CD8-positive, alpha-beta T cell (primary cell): ENCODE measurements at regions of chr1 and their contacts with region 1.

Region 1: GRCh38 chr1:94463765-94464330 is 45.7 kb downstream of the ABCD3 start:
- DNase-seq: peak in 2 of 9 experiments; percentile 42 to 57
- ATAC-seq: peak; percentile 46
- H3K4me3 ChIP-seq: no peak overlapping the region
- H3K4me3 Mint-ChIP-seq: no peak overlapping the region
- H3K27ac ChIP-seq: no peak overlapping the region
- H3K27ac Mint-ChIP-seq: no peak overlapping the region
- H3K4me1 ChIP-seq: no peaks in the 10 kb centered on the region
- H3K4me1 Mint-ChIP-seq: peaks cover 7% of the 10 kb centered on the region
- H3K27me3 ChIP-seq: no peaks in the 10 kb centered on the region
- H3K27me3 Mint-ChIP-seq: no peaks in the 10 kb centered on the region
- CTCF ChIP-seq: peak; percentile 36

Region 2: GRCh38 chr1:93629099-93630059 is 834.5 kb before region 1 on chr1:
- CTCF ChIA-PET with region 1: no interaction called
- POLR2A ChIA-PET with region 1: no interaction called
- intact Hi-C with region 1: loop called in 1 of 2 experiments (anchors 5 kb)
- DNase-seq: peak; percentile 8 to 78 (median 37)
- ATAC-seq: peak; percentile 93
- H3K4me3 ChIP-seq: no peak overlapping the region
- H3K4me3 Mint-ChIP-seq: no peak overlapping the region
- H3K27ac ChIP-seq: no peak overlapping the region
- H3K27ac Mint-ChIP-seq: no peak overlapping the region
- H3K4me1 ChIP-seq: no peaks in the 10 kb centered on the region
- H3K4me1 Mint-ChIP-seq: no peaks in the 10 kb centered on the region
- H3K27me3 ChIP-seq: no peaks in the 10 kb centered on the region
- H3K27me3 Mint-ChIP-seq: no peaks in the 10 kb centered on the region
- CTCF ChIP-seq: peak; percentile 90

Region 3: DNA sequence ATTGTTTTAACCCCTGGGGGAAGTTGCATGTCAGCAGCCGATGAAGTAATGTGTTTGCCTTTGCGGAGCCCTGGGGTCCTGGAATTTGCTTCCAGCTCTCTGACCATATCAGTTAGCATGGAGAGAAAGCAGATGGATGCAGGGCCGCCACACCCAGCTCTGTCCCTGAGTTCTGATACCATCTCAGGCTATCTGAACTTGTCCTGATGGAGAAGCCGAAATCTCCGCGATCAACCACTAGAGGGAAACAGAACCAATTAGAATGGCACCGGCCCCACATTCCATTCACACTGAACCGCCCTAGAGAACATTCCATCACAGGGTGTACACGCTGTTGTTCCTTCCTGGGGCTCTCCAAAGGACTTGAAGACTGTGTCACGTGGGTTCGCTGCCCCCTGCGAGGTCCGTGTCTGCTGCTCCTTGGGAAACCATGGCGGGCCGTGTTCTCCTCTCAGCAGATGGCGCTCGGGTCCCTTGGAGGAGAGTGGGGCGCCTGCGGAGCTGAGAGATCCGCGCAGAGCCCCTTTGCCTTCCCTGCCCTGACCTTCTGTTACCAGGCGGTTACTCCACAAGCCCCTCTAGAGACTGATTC is 418.3 kb before region 1 on chr1:
- CTCF ChIA-PET with region 1: interaction called, 24 read pairs
- POLR2A ChIA-PET with region 1: no interaction called
- intact Hi-C with region 1: loop called (anchors 2 kb)
- DNase-seq: peak in 7 of 9 experiments; percentile 1 to 51 (median 25)
- ATAC-seq: no peak
- H3K4me3 ChIP-seq: peak overlapping the region; percentile 20 to 26
- H3K4me3 Mint-ChIP-seq: peak overlapping the region; percentile 55
- H3K27ac ChIP-seq: no peak overlapping the region
- H3K27ac Mint-ChIP-seq: no peak overlapping the region
- H3K4me1 ChIP-seq: no peaks in the 10 kb centered on the region
- H3K4me1 Mint-ChIP-seq: peaks cover 5% of the 10 kb centered on the region
- H3K27me3 ChIP-seq: peaks cover 0 to 2% of the 10 kb centered on the region in 2 experiments
- H3K27me3 Mint-ChIP-seq: peaks cover 7% of the 10 kb centered on the region
- CTCF ChIP-seq: peak; percentile 22

Region 4: GRCh38 chr1:94335950-94336349 is 127.9 kb before region 1 on chr1:
- CTCF ChIA-PET with region 1: interaction called, 4 read pairs
- POLR2A ChIA-PET with region 1: no interaction called
- intact Hi-C with region 1: loop called in 1 of 2 experiments (anchors 10 kb)
- DNase-seq: peak in 3 of 9 experiments; percentile 6 to 52 (median 26)
- ATAC-seq: no peak
- H3K4me3 ChIP-seq: no peak overlapping the region
- H3K4me3 Mint-ChIP-seq: no peak overlapping the region
- H3K27ac ChIP-seq: no peak overlapping the region
- H3K27ac Mint-ChIP-seq: no peak overlapping the region
- H3K4me1 ChIP-seq: no peaks in the 10 kb centered on the region
- H3K4me1 Mint-ChIP-seq: no peaks in the 10 kb centered on the region
- H3K27me3 ChIP-seq: no peaks in the 10 kb centered on the region
- H3K27me3 Mint-ChIP-seq: peaks cover 3% of the 10 kb centered on the region
- CTCF ChIP-seq: peak; percentile 43

Region 5: DNA sequence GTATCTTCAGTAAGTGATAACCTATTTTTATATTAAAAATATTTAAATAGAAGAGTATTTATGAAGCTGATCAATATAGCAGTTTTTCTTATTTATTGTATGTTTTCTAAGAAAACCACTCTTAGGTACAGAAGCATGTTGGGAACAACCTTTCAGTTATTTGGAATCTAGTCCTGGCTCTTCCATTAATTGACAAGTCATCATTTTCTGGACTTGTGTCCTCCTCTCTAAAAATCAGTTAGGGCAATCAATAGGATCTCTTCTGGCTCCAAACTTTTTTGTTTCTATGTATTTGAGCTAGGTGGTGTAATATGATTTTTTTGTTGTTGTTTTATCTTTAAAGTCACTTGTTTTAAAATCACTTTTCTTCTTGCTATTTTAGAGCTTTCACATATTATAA is 11.4 kb after region 1 on chr1:
- CTCF ChIA-PET with region 1: interaction called, 23 read pairs
- POLR2A ChIA-PET with region 1: no interaction called
- intact Hi-C with region 1: no loop called
- DNase-seq: no peak
- ATAC-seq: no peak
- H3K4me3 ChIP-seq: no peak overlapping the region
- H3K4me3 Mint-ChIP-seq: no peak overlapping the region
- H3K27ac ChIP-seq: no peak overlapping the region
- H3K27ac Mint-ChIP-seq: no peak overlapping the region
- H3K4me1 ChIP-seq: no peaks in the 10 kb centered on the region
- H3K4me1 Mint-ChIP-seq: no peaks in the 10 kb centered on the region
- H3K27me3 ChIP-seq: no peaks in the 10 kb centered on the region
- H3K27me3 Mint-ChIP-seq: no peaks in the 10 kb centered on the region
- CTCF ChIP-seq: no peak